Activated T-helper 2 cell treated with anti-CD3 and anti-CD28 coated beads, Interferon-gamma antibody, Interleukin-2, Interleukin-4, amounts not matched to agents 10 μg/mL and 5 μg/mL and 100 μg/mL, durations not matched to agents 14 hours and 24 hours and 36 hours (primary cell): ENCODE measurements at regions of chr4 and their contacts with region 1.

Region 1: GRCh38 chr4:126604268-126604867 is 1028.4 kb upstream of the INTU start:
- DNase-seq: no peak
- H3K4me3 Mint-ChIP-seq: no peak overlapping the region
- H3K27ac Mint-ChIP-seq: no peak overlapping the region
- H3K4me1 Mint-ChIP-seq: no peaks in the 10 kb centered on the region
- H3K27me3 Mint-ChIP-seq: no peaks in the 10 kb centered on the region

Region 2: DNA sequence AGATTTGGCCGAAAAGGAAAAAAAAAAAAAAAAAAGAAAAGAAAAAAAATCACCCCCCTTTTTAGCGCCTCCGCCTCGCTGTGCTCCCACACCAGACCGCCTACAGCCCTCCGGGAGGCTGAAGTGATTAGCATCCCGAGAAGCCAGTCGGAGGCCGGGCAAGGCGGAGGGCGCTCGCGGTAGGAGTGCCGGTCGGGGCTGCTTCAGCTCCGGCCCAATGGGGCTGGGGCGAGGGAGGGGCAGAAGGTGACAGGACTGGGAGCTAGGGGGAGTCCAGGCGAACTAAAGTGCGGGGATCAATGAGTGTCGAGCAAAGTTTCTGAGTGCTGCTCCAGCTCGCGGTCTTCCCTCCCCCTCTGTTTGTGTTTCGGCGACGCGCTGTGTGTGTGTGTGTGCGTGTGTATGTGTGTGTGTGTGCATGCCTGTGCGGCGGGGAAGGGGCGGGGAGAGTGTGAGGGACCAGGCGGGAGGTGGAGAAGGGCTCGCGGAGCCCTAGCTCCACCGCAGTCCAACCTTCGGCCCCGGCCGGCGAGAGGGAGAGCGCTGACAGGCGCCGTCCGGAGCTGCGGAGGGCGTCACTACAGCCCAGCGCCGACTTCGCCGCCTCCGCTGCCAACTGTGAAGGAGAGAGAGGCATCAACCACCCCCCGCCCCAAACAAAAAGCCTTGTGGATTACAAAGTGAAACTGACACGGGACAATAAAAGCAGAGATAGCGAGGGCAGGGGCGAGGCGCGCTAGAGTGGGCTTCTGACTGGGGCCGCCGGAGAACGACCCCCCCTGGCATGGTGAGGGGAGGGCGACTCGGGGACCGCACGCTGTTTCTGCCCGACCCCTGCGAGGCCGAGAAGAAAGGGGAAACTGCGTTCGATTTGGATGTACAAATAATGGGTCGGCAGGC is 1289.4 kb before region 1 on chr4 and contains the start of gene FAT4:
- intact Hi-C with region 1: loop called (anchors 10 kb)
- DNase-seq: peak; percentile 20
- H3K4me3 Mint-ChIP-seq: peak within 1 kb of the TSS; percentile 77
- H3K27ac Mint-ChIP-seq: no peak within 1 kb of the TSS
- H3K4me1 Mint-ChIP-seq: peaks cover 14% of the 10 kb centered on the region
- H3K27me3 Mint-ChIP-seq: peaks cover 54% of the 10 kb centered on the region
- total RNA-seq, gene FAT4: not detected in 2 replicates

Region 3: DNA sequence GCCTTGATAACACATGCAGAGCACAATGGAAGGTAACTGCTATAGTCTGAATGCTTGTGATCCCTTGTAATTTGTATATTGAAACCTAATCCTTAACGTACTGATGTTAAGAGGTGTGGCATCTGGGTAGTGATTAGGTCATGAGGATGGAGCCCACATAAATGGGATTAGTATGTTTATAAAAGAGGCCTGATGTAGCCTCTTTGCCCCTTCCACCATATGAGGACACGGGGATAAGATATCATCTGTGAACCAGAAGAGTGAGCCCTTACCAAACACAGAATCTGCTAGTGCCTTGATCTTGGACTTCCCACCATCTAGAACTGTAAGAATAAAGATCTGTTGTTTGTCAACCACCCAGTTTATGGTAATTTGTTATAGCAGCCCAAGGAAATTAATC is 45.8 kb before region 1 on chr4:
- intact Hi-C with region 1: no loop called
- DNase-seq: no peak
- H3K4me3 Mint-ChIP-seq: no peak overlapping the region
- H3K27ac Mint-ChIP-seq: no peak overlapping the region
- H3K4me1 Mint-ChIP-seq: no peaks in the 10 kb centered on the region
- H3K27me3 Mint-ChIP-seq: no peaks in the 10 kb centered on the region